Tibial artery (tissue), 4 donors: ENCODE measurements at regions of chr5 and their contacts with region 1.

Region 1: DNA sequence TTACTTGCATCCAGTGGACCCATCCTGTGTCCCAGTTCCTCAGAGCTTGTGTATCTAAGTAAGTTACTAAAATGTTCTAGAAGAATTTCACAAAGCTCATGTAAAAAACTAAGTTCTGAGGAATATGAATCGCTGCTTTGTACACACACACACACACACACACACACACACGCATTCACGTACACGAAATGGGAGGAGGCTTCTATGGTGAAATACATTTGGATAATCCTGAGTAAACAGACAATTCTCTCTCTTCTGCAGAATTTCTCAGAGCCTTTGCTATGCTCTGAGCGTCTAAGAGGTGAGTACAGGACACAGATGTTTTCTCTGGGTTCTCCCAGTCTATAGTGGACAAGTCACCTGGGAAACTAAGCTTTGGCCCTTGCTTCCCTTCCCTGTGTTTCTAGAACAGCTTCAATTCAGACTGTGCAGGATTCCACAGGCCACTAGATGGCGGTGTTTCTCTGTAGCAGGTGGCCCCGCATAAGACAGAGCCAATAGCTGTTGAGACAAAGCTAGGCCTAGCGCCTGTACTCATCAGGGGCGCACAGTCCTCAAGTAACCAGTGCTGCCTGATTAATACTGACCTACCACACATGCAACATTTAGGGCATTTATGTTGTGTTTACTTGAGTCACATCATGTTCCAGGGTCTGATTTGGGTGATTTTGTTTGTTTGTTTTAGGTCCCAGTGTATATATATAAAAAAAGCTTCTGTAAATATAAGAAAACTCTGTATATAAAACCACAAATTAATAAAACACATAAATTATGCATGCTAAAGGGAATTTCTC is 114.8 kb downstream of the LIFR start:
- DNase-seq: peak; percentile 92
- H3K4me3 ChIP-seq: no peak overlapping the region
- H3K27ac ChIP-seq: no peak overlapping the region
- H3K4me1 ChIP-seq: peaks cover 0 to 27% (median 17%) of the 10 kb centered on the region in 4 donors
- H3K27me3 ChIP-seq: no peaks in the 10 kb centered on the region
- CTCF ChIP-seq: peak; percentile 95 to 96

Region 2: DNA sequence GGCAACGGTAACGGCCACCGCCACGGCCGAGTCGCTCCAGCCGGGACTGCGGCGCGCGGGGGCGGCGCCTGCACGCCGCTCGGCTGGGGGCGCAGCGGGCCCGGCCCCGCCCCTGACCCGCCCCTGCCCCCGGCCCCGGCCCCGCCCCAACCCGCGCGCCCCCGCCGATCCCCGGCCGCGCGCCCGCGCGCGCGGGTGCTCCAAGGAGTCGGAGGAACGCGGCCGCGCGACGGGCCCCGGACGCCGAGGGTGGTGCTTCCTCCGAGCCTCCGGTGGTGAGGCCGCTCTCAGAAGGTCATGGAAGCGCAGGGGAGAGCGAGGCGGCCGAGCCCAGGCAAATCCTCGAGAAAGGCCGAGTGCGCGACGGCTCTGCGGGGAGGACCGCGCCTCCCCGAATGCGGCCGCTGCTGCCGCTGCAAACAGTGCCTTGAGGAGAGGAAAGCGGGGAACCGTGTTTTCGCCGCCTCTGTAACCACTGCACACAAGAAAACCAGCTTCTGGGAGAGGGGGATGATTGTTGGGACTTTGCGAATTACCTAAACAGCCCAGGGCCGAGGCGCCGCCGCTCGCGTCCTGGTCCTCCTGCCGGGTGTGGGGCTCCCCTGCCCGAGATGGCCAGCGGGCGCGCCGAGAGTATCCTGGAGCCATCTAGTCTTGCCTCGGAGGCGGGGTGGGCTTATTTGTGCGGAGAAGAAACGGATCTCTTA is 115.1 kb after region 1 on chr5 and contains the start of gene LIFR:
- intact Hi-C with region 1: loop called (anchors 5 kb)
- DNase-seq: peak; percentile 78 to 91
- H3K4me3 ChIP-seq: peak within 1 kb of the TSS; percentile 72 to 90
- H3K27ac ChIP-seq: peak within 1 kb of the TSS; percentile 99
- H3K4me1 ChIP-seq: peaks cover 0 to 41% (median 6%) of the 10 kb centered on the region in 4 donors
- H3K27me3 ChIP-seq: no peaks in the 10 kb centered on the region
- CTCF ChIP-seq: peak in 1 of 2 experiments; percentile 6

Region 3: GRCh38 chr5:38666668-38667498 is 225.2 kb after region 1 on chr5:
- intact Hi-C with region 1: loop called (anchors 5 kb)
- DNase-seq: peak; percentile 63 to 85
- H3K4me3 ChIP-seq: no peak overlapping the region
- H3K27ac ChIP-seq: peak overlapping the region; percentile 84 to 91
- H3K4me1 ChIP-seq: peaks cover 0 to 40% (median 22%) of the 10 kb centered on the region in 4 donors
- H3K27me3 ChIP-seq: no peaks in the 10 kb centered on the region
- CTCF ChIP-seq: peak; percentile 74 to 93